ENCODE measurements at regions of chr1 and their contacts with region 1.

Region 1: GRCh38 chr1:206663832-206664652 is 20.7 kb upstream of the MAPKAPK2 start:
- DNase-seq: peak; percentile 86
- H3K4me3 Mint-ChIP-seq: no peak overlapping the region
- H3K27ac Mint-ChIP-seq: no peak overlapping the region
- H3K4me1 Mint-ChIP-seq: peaks cover 12% of the 10 kb centered on the region
- H3K27me3 Mint-ChIP-seq: peaks cover 26% of the 10 kb centered on the region
- CTCF ChIP-seq: peak; percentile 99

Region 2: DNA sequence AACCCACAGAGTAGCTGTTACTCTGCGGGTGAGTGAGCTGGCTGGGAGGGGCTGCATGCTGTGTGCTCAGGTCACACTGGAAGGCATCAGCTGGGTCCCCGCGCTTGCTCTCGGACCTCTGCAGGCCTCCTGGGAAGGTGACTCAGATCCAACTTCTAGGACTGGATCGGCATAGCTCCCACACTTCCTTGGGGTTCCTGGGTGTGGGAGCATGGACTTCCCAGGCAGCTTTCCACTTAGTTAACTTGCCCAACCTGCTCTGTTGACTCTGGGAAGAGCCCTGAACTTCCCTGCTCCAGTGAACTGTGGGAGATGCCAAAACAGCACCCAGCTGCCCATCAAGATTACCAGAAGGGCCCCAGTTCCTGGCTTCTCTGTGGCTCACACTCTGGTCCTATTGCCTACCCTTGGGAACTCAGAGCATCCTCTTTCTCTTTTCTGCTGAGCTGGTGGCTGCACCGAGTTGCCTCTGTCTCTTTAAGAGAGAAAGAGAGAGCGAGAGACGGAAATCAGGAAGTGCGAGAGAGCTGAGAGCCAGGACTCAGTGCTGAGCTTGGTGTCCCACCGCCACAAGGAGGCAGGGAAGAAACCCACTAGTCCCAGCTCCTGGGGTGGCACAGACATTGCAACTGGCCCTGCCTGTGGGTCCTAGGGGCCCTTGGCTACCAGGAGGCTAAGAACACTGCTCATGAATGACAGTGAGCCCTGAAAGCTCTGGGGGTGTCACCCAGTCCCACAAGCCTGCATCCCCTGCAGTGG is 193.9 kb before region 1 on chr1 and contains the start of gene IKBKE:
- CTCF ChIA-PET with region 1: interaction called, 12 read pairs
- POLR2A ChIA-PET with region 1: no interaction called
- intact Hi-C with region 1: no loop called
- DNase-seq: peak; percentile 85
- H3K4me3 Mint-ChIP-seq: peak within 1 kb of the TSS; percentile 75
- H3K27ac Mint-ChIP-seq: peak within 1 kb of the TSS; percentile 61
- H3K4me1 Mint-ChIP-seq: peaks cover 43% of the 10 kb centered on the region
- H3K27me3 Mint-ChIP-seq: peaks cover 13% of the 10 kb centered on the region
- CTCF ChIP-seq: no peak
- total RNA-seq, gene IKBKE: 7.1 and 12.1 TPM in 2 replicates

Region 3: DNA sequence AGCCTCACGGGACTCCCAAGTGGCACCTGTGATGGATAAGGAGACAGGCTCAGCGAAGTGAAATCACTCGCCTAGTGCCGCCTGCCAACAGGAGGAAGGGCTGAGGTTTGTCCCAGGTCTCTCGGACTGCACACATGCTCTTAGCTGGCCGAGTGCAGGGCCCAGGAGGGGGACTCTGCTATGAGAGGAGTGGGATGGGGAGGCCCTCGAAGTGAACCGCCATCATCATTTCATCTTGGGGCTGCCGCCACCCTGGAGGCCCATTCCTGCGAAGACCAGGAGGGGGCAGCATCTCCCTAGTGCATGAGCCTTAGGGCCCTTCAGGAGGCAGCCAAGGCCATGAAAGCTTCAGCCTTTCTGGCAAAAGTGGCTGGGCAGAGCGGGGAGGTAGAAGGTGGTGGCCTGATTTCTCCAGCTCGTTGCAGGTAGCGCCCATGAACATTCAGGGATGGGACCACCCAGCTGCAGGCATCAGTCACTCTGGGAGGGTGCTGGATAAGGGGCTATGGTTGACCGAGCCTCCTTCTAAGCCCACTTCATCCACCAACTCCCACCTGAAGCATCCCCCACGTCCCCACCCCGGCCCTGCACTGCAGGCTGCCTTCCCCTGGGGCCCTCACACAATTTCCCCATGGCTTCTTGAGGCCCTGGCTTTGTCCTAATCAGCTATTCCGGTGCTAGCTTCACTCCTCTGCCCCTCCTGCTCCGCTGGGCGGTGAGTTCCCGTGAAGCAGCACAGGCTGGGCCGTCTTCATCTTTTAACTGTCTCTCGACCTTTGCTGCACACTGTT is 173.9 kb before region 1 on chr1:
- CTCF ChIA-PET with region 1: interaction called, 41 read pairs
- POLR2A ChIA-PET with region 1: interaction called, 3 read pairs
- intact Hi-C with region 1: loop called (anchors 2 kb)
- DNase-seq: peak; percentile 89
- H3K4me3 Mint-ChIP-seq: no peak overlapping the region
- H3K27ac Mint-ChIP-seq: no peak overlapping the region
- H3K4me1 Mint-ChIP-seq: no peaks in the 10 kb centered on the region
- H3K27me3 Mint-ChIP-seq: no peaks in the 10 kb centered on the region
- CTCF ChIP-seq: peak; percentile 100

Region 4: DNA sequence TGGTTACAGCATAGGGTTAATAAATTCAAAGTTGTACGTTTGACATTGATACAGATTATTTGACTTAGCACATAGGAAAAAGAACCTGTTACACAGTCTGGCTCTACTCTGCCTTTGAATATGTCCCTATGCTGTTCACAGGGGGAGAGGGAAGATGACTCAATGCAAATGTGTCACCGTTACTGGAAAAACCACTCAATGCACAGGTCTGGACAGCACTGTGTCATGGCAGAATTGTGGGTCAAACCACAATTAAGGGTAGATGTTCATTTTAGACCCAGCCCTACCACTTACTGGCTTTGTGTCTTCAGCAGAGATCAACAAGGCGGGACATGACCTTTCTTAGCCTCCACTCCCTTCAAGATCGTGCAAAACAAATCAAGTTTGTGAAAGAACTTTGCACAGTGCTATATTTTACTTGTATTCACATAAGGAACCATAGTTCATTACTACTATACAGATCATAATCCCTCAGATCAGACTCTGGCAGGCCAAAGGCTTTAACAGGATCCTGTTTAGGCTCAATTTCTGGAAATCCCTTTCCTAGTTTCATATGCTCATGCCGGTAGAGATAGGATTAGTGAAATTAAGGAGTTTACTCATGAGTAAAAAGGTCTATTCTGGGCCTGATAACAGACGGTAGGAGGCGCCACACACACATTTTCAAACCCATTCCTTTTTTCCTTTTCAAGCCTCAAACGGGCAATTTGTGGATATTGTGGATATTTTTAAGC is 73.8 kb before region 1 on chr1:
- CTCF ChIA-PET with region 1: interaction called, 20 read pairs
- POLR2A ChIA-PET with region 1: no interaction called
- intact Hi-C with region 1: no loop called
- DNase-seq: peak; percentile 95
- H3K4me3 Mint-ChIP-seq: no peak overlapping the region
- H3K27ac Mint-ChIP-seq: peak overlapping the region; percentile 66
- H3K4me1 Mint-ChIP-seq: peaks cover 28% of the 10 kb centered on the region
- H3K27me3 Mint-ChIP-seq: no peaks in the 10 kb centered on the region
- CTCF ChIP-seq: peak; percentile 41

Region 5: DNA sequence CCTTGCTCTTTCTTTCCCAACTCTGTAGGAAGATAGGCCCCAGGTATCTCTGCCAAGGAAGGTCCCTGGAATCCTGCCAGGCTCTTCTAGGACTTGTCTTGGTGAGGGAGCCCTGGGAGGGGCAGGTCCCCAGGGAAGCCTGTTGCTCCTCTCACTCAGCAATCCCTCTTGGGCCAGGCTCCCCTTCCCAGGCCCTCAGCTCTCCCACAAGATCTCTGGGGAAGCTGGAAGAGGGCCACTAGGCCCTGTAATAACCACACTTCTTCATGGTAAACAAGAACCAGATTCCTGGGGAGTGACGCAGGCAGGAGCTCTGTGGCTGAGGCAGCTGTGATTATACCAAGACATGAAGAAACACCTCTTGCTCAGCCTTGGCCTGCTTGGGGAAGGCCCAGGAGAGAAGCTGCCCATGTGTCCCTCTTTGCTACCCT is 10.7 kb after region 1 on chr1:
- CTCF ChIA-PET with region 1: interaction called, 1,191 read pairs
- POLR2A ChIA-PET with region 1: interaction called, 43 read pairs
- intact Hi-C with region 1: no loop called
- DNase-seq: peak; percentile 100
- H3K4me3 Mint-ChIP-seq: peak overlapping the region; percentile 48
- H3K27ac Mint-ChIP-seq: no peak overlapping the region
- H3K4me1 Mint-ChIP-seq: peaks cover 18% of the 10 kb centered on the region
- H3K27me3 Mint-ChIP-seq: no peaks in the 10 kb centered on the region
- CTCF ChIP-seq: no peak

Region 6: DNA sequence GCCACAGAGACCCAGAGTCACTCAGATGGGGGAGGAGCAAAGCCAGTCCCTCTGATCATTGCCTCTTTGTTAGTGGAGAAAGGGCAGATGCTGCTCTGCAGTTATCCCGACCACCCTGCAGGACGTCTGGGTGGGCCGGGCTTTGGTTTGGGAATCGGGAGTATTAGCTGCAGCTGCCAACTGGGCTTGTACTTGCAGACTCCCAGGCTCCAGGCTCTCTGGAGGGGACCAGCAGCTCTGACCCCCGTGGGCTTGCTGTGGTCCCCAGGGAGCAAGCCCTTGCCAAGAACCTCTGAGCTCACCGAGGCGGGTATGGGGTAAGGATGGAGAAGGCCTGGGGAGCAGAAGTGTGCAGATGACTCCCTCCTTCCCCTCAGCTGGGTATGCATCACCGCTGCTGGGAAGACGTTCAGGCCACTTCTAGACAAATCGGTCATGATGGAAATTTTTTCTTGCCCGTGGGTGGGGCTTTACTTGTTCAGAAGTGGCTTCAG is 42.3 kb after region 1 on chr1:
- CTCF ChIA-PET with region 1: interaction called, 28 read pairs
- POLR2A ChIA-PET with region 1: interaction called, 3 read pairs
- intact Hi-C with region 1: no loop called
- DNase-seq: no peak
- H3K4me3 Mint-ChIP-seq: no peak overlapping the region
- H3K27ac Mint-ChIP-seq: no peak overlapping the region
- H3K4me1 Mint-ChIP-seq: peaks cover 61% of the 10 kb centered on the region
- H3K27me3 Mint-ChIP-seq: no peaks in the 10 kb centered on the region
- CTCF ChIP-seq: no peak

Region 7: DNA sequence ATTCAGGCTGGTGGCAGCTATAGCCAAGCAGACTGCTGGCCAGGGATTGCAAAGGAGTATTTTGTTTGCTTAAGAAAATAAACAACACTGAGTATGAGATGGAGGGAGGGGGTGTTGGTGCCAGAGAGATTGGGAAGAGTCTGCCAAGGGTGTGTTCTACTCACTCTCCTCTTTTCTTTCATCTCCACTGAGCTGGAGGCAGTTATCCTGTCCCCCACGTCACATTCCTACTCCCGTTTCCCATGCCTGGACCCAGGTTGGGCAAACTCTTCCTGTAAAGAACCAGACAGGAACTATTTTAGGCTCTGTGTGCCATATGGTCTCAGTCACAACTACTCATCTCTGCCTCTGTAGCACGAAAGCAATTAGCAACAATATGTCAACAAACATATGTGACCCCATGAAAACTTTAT is 231.8 kb after region 1 on chr1:
- CTCF ChIA-PET with region 1: interaction called, 13 read pairs
- POLR2A ChIA-PET with region 1: no interaction called
- intact Hi-C with region 1: no loop called
- DNase-seq: peak; percentile 99
- H3K4me3 Mint-ChIP-seq: peak overlapping the region; percentile 2
- H3K27ac Mint-ChIP-seq: peak overlapping the region; percentile 89
- H3K4me1 Mint-ChIP-seq: peaks cover 71% of the 10 kb centered on the region
- H3K27me3 Mint-ChIP-seq: no peaks in the 10 kb centered on the region
- CTCF ChIP-seq: no peak

Measured in MCF 10A (cell line).